SK-N-SH (cell line): ENCODE measurements at regions of chr2 and their contacts with region 1.

Region 1: DNA sequence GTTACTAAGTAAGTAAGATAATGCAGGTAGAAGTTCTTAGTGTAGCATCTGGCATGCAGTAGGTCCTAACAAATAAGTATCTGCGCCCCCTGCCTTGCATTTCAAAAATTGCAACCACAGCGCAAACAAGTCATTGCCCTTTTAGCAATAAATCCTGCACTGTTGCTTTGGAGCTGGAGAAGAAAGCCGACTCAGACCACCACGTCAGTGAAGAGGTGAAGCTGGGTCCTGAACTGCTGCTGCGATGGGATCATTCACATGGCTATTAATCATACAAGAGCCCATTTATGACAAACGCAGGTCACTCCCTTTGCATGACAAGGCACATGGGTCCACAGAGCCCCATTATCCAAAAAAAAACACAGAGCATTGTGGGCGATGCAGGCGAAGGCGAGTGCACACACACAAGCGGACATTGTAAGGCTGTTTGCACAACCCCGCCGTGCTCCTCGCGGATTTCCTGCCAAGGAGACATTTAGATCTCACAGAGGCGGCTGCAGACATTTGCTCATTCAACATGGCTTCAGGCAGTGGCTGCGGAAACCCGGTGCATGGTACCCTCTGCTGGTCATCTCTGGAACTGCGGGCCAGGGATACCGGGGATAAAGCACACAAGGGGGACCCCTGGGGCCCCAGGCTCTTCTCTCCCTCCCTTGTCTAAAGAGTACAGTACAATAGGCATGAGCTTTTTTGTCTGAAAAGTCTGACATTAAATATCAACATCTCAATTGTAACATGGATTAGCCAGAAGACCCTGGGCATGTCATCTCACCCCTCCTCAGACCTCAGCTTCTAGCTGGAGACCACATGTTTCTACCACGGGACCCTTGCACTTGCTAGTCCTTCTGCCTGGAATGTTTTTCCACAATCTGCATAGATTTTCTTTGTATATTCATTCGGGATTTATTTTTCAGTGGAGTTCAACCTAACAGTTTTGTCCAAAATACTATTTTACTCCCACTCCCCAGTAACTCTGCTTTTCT is 56.7 kb downstream of the CYRIA start:
- DNase-seq: peak; percentile 89
- H3K4me3 ChIP-seq: peak overlapping the region; percentile 59 to 86
- H3K27ac ChIP-seq: peak overlapping the region in 1 of 2 experiments; percentile 79; a peak in 2 of 4 replicates
- H3K4me1 ChIP-seq: peaks cover 4 to 5% of the 10 kb centered on the region in 2 experiments; a peak in 2 of 4 replicates
- H3K27me3 ChIP-seq: no peaks in the 10 kb centered on the region
- CTCF ChIP-seq: peak; percentile 89
- EP300 ChIP-seq: no peak; a peak in 1 of 4 replicates
- RAD21 ChIP-seq: peak; percentile 91

Region 2: DNA sequence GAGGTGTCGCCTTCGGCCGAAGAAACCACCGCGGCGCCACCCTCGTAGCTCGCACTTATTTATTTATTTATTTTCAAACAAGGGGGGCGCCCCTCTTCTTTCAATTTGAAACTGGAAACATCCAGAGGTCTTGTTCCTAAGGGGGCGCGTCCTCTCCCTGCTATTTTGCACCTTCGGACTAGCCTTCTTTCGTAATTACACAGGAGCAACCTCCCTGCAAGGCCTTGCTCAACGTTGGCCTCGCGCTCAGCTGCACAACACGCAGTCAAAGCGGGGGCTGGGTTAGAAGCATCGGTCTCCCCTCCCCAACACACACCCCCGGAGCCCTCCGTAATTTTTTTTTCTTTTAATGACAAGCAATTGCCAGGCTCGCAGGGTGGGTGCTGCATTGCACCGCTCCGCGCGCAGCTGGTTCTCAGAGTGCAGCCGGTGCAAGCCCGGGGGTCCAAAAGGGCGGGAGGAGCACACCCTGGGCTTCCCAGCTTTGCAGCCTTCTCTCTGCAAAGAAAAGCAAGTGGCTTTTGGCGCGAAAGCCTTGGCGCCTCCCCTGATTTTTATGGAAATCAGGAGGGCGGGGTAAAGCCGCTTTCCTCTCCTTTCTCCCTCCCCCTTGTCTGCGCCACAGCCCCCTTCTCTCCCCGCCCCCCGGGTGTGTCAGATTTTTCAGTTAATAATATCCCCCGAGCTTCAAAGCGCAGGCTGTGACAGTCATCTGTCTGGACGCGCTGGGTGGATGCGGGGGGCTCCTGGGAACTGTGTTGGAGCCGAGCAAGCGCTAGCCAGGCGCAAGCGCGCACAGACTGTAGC is 668.9 kb before region 1 on chr2 and contains the start of gene MYCN:
- CTCF ChIA-PET with region 1: interaction called, 47 read pairs
- POLR2A ChIA-PET with region 1: no interaction called
- DNase-seq: peak; percentile 89
- H3K4me3 ChIP-seq: peak within 1 kb of the TSS; percentile 53 to 65
- H3K27ac ChIP-seq: peak within 1 kb of the TSS in 1 of 2 experiments; percentile 77; a peak in 2 of 4 replicates
- H3K4me1 ChIP-seq: peaks cover 0 to 31% of the 10 kb centered on the region in 2 experiments; a peak in 2 of 4 replicates
- H3K27me3 ChIP-seq: peaks cover 41% of the 10 kb centered on the region
- CTCF ChIP-seq: peak; percentile 28
- EP300 ChIP-seq: 0 out of 4 replicates have a peak, but pooled peaks of 1 of the 2 experiments have one; percentile 27
- RAD21 ChIP-seq: peak; percentile 90
- polyA plus RNA-seq, gene MYCN: 0.03 TPM in 1 of 2 replicates, not detected in the other

Region 3: GRCh38 chr2:16546128-16546754 is 62.7 kb before region 1 on chr2:
- CTCF ChIA-PET with region 1: interaction called, 26 read pairs
- POLR2A ChIA-PET with region 1: no interaction called
- DNase-seq: no peak
- H3K4me3 ChIP-seq: no peak overlapping the region
- H3K27ac ChIP-seq: no peak overlapping the region
- H3K4me1 ChIP-seq: no peaks in the 10 kb centered on the region
- H3K27me3 ChIP-seq: no peaks in the 10 kb centered on the region
- CTCF ChIP-seq: no peak
- EP300 ChIP-seq: no peak
- RAD21 ChIP-seq: no peak

Region 4: GRCh38 chr2:16591370-16591933 is 17.5 kb before region 1 on chr2:
- CTCF ChIA-PET with region 1: interaction called, 25 read pairs
- POLR2A ChIA-PET with region 1: no interaction called
- DNase-seq: no peak
- H3K4me3 ChIP-seq: no peak overlapping the region
- H3K27ac ChIP-seq: no peak overlapping the region
- H3K4me1 ChIP-seq: no peaks in the 10 kb centered on the region
- H3K27me3 ChIP-seq: no peaks in the 10 kb centered on the region
- CTCF ChIP-seq: no peak
- EP300 ChIP-seq: no peak
- RAD21 ChIP-seq: no peak

Region 5: DNA sequence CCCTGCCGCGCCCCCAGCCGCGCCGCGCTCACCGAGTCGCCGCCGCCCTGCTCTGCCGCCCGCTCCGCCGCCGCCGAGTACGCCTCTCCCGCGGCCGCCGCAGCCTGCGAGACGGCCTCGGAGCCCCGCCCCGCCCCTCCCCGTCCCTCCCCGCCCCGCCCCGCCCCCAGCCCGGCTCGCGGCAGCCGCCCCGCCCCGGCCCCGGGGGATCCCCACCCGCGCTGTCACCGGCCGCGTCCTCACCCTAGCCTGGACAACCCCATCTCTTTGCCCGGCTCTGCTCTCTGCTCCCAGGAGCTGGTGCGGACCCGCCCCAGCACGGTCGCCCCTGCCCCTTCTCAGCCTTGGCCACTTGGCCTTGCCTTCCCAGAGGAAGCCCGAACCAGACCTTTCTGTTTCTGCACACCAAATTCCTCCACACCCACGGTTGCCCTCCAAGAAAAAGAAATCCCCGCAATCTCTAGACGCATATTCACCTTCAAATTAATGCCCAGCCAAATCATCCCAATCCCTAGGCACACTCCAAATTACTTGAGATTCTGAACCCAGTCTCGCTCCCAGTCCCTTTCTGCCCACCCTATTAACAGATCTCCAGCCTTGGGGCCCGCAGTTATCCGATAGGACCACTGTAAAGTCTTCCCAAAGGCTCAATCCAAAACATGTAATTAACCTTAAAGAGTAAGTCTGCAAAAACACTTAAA is 56.9 kb after region 1 on chr2 and contains the start of gene CYRIA:
- CTCF ChIA-PET with region 1: interaction called, 22 read pairs
- POLR2A ChIA-PET with region 1: no interaction called
- DNase-seq: peak; percentile 91
- H3K4me3 ChIP-seq: peak within 1 kb of the TSS; percentile 49 to 57
- H3K27ac ChIP-seq: peak within 1 kb of the TSS in 1 of 2 experiments; percentile 53; a peak in 1 of 4 replicates
- H3K4me1 ChIP-seq: peaks cover 4 to 33% of the 10 kb centered on the region in 2 experiments; a peak in 2 of 4 replicates
- H3K27me3 ChIP-seq: peaks cover 13% of the 10 kb centered on the region; the same call in 1 of the 2 replicates
- CTCF ChIP-seq: no peak
- EP300 ChIP-seq: no peak
- RAD21 ChIP-seq: no peak
- polyA plus RNA-seq, gene CYRIA: 0.08 and 0.13 TPM in 2 replicates

Region 6: GRCh38 chr2:16745466-16745865 is 136.5 kb after region 1 on chr2:
- CTCF ChIA-PET with region 1: interaction called, 12 read pairs
- POLR2A ChIA-PET with region 1: no interaction called
- DNase-seq: no peak
- H3K4me3 ChIP-seq: no peak overlapping the region
- H3K27ac ChIP-seq: no peak overlapping the region
- H3K4me1 ChIP-seq: no peaks in the 10 kb centered on the region
- H3K27me3 ChIP-seq: no peaks in the 10 kb centered on the region
- CTCF ChIP-seq: no peak
- EP300 ChIP-seq: no peak
- RAD21 ChIP-seq: no peak

Region 7: GRCh38 chr2:17309741-17310339 is 700.9 kb after region 1 on chr2:
- CTCF ChIA-PET with region 1: interaction called, 12 read pairs
- POLR2A ChIA-PET with region 1: no interaction called
- DNase-seq: peak; percentile 72
- H3K4me3 ChIP-seq: no peak overlapping the region; a peak in 1 of 4 replicates
- H3K27ac ChIP-seq: no peak overlapping the region
- H3K4me1 ChIP-seq: peaks cover 0 to 6% of the 10 kb centered on the region in 2 experiments; a peak in 2 of 4 replicates
- H3K27me3 ChIP-seq: no peaks in the 10 kb centered on the region
- CTCF ChIP-seq: peak; percentile 93
- EP300 ChIP-seq: no peak; a peak in 1 of 4 replicates
- RAD21 ChIP-seq: peak; percentile 96